ENCODE measurements at regions of chr1 and their contacts with region 1.

Region 1: GRCh38 chr1:219999821-220000220 is 46.5 kb downstream of the EPRS1 start:
- DNase-seq: no peak
- CTCF ChIP-seq: no peak

Region 2: DNA sequence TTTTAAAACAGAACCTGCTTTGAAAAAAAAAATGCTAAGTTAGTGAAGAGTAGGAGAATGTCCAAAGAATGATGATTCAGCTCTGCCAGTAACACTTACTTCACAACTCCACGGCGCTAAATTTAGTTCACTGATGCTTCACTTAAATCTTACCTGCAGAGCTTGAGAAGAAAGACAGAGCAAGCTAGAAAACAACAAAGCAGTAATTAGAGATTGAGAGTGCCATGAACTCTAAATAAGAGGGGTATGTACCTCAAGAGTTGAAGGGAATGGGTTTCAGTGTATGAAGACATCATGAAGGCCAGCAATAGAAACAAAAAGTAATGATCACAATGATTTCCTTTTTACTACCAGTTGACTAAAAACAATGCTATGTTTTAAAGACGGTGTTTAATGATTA is 13.7 kb after region 1 on chr1:
- CTCF ChIA-PET with region 1: interaction called, 16 read pairs
- POLR2A ChIA-PET with region 1: no interaction called
- DNase-seq: peak; percentile 32
- CTCF ChIP-seq: no peak

Region 3: GRCh38 chr1:220313576-220313975 is 313.8 kb after region 1 on chr1:
- CTCF ChIA-PET with region 1: no interaction called
- POLR2A ChIA-PET with region 1: no interaction called
- DNase-seq: no peak
- CTCF ChIP-seq: no peak